Heart left ventricle (tissue), 16 donors: ENCODE measurements at regions of chr13 and their contacts with region 1.

Region 1: GRCh38 chr13:113431171-113431570 is 22.1 kb downstream of the ADPRHL1 start:
- DNase-seq: peak in 2 of 5 donors; percentile 20
- ATAC-seq: peak in 3 of 4 donors; percentile 7 to 25 (median 12)
- H3K4me3 ChIP-seq: no peak overlapping the region
- H3K27ac ChIP-seq: peak overlapping the region in 4 of 12 donors; percentile 17 to 75 (median 36)
- H3K4me1 ChIP-seq: peaks cover 0 to 36% (median 0%) of the 10 kb centered on the region in 12 donors
- H3K27me3 ChIP-seq: no peaks in the 10 kb centered on the region
- CTCF ChIP-seq: no peak
- POLR2A ChIP-seq: no peak

Region 2: DNA sequence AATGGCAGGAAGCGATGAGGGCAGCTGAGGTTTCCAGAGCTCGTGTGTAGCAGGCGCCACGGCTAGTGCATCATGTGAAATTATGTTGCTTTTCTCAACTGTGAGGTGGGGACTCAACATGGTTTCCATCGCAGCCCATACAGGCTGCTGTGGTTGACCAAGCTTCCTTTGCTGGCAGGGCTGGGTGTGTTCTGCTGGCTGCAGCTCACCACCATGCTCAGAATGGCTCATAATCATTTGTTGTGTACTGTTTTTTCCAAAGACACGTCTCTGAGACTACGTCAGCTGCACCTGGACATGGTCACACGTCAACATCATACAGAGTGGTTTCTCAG is 717.3 kb after region 1 on chr13:
- intact Hi-C with region 1: loop called in 1 of 10 experiments (anchors 5 kb)
- DNase-seq: peak in 1 of 5 donors; percentile 8
- ATAC-seq: peak in 2 of 4 donors; percentile 23 to 41
- H3K4me3 ChIP-seq: no peak overlapping the region
- H3K27ac ChIP-seq: peak overlapping the region in 1 of 12 donors; percentile 72
- H3K4me1 ChIP-seq: peaks cover 0 to 38% (median 0%) of the 10 kb centered on the region in 12 donors
- H3K27me3 ChIP-seq: no peaks in the 10 kb centered on the region
- CTCF ChIP-seq: no peak
- POLR2A ChIP-seq: no peak